Activated naive CD4-positive, alpha-beta T cell treated with anti-CD3 and anti-CD28 coated beads for 36 hours (primary cell): ENCODE measurements at regions of chr17 and their contacts with region 1.

Region 1: GRCh38 chr17:8041249-8041928 is 2.5 kb downstream of the ALOX15B start:
- DNase-seq: peak; percentile 62
- H3K4me3 Mint-ChIP-seq: no peak overlapping the region
- H3K27ac Mint-ChIP-seq: no peak overlapping the region
- H3K4me1 Mint-ChIP-seq: peaks cover 3% of the 10 kb centered on the region
- H3K27me3 Mint-ChIP-seq: peaks cover 22% of the 10 kb centered on the region

Region 2: DNA sequence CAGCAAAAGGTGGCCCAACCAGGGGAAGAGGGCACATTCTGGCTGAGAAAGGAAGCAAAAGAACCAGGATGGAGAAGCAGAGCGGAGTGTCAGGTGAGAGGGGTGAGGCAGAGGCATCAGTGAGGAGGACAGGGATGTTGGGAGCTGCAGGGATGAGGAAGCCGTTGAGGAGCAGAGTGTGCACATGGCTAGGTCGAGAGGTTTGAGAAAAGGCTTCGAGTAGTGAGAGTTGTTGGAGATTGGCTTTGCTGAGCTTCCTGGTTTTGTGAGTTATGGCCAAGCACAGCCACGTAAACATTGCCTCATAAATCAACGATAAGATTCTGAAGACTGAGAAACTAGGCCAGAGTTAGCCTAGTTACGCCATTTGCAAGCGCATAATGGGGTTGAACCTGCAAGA is 297.0 kb before region 1 on chr17:
- CTCF ChIA-PET with region 1: interaction called, 15 read pairs
- intact Hi-C with region 1: no loop called
- DNase-seq: no peak
- H3K4me3 Mint-ChIP-seq: no peak overlapping the region
- H3K27ac Mint-ChIP-seq: no peak overlapping the region
- H3K4me1 Mint-ChIP-seq: no peaks in the 10 kb centered on the region
- H3K27me3 Mint-ChIP-seq: peaks cover 8% of the 10 kb centered on the region

Region 3: GRCh38 chr17:7997186-7997585 is 44.2 kb before region 1 on chr17:
- CTCF ChIA-PET with region 1: interaction called, 10 read pairs
- intact Hi-C with region 1: no loop called
- DNase-seq: peak; percentile 74
- H3K4me3 Mint-ChIP-seq: no peak overlapping the region
- H3K27ac Mint-ChIP-seq: no peak overlapping the region
- H3K4me1 Mint-ChIP-seq: peaks cover 8% of the 10 kb centered on the region
- H3K27me3 Mint-ChIP-seq: peaks cover 13% of the 10 kb centered on the region

Region 4: GRCh38 chr17:8016632-8017478 is 24.5 kb before region 1 on chr17:
- CTCF ChIA-PET with region 1: interaction called, 29 read pairs
- intact Hi-C with region 1: loop called (anchors 1 kb)
- DNase-seq: peak; percentile 80
- H3K4me3 Mint-ChIP-seq: peak overlapping the region; percentile 61
- H3K27ac Mint-ChIP-seq: no peak overlapping the region
- H3K4me1 Mint-ChIP-seq: peaks cover 4% of the 10 kb centered on the region
- H3K27me3 Mint-ChIP-seq: peaks cover 6% of the 10 kb centered on the region

Region 5: DNA sequence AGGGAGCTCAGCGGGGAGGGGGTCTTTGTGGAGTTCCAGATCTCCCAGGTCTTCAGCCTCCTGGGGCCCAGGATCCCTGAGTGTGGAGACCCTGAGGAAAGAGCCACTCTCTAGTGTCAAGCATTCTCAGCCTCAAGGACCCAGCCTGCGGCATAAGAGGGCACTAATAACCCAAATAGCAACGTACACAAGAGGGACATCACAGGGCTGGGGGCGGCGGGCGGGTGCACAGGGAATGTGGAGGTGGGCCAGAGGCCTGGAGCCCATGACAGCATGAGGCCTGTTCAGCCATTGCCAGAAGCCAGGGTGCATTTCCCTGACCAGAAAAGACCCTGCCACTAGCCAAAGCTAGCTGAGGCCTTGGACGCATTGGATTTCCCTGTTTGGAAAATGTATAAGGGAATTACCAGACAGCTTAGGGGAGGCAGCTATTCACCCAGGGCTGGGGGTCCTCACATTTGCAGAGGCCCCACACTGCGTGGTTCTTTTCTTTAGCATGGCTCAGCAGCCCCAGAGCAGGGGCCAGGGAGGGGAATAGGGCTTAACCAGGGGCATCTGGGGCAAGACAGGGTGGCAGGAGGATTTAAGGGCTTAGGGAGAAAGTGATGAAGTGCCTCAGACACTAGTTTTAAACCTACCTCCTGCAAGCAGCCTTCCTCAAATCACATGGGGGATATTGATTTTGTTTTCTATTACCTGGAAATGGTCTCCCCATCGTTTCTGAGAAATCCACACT is 16.0 kb before region 1 on chr17:
- CTCF ChIA-PET with region 1: interaction called, 10 read pairs
- intact Hi-C with region 1: no loop called
- DNase-seq: no peak
- H3K4me3 Mint-ChIP-seq: no peak overlapping the region
- H3K27ac Mint-ChIP-seq: no peak overlapping the region
- H3K4me1 Mint-ChIP-seq: no peaks in the 10 kb centered on the region
- H3K27me3 Mint-ChIP-seq: peaks cover 16% of the 10 kb centered on the region